Activated naive CD8-positive, alpha-beta T cell treated with anti-CD3 and anti-CD28 coated beads, Interleukin-2, amount 10 ng/mL, durations not matched to agents 7 days and 5 days (primary cell): ENCODE measurements at regions of chr9 and their contacts with region 1.

Region 1: DNA sequence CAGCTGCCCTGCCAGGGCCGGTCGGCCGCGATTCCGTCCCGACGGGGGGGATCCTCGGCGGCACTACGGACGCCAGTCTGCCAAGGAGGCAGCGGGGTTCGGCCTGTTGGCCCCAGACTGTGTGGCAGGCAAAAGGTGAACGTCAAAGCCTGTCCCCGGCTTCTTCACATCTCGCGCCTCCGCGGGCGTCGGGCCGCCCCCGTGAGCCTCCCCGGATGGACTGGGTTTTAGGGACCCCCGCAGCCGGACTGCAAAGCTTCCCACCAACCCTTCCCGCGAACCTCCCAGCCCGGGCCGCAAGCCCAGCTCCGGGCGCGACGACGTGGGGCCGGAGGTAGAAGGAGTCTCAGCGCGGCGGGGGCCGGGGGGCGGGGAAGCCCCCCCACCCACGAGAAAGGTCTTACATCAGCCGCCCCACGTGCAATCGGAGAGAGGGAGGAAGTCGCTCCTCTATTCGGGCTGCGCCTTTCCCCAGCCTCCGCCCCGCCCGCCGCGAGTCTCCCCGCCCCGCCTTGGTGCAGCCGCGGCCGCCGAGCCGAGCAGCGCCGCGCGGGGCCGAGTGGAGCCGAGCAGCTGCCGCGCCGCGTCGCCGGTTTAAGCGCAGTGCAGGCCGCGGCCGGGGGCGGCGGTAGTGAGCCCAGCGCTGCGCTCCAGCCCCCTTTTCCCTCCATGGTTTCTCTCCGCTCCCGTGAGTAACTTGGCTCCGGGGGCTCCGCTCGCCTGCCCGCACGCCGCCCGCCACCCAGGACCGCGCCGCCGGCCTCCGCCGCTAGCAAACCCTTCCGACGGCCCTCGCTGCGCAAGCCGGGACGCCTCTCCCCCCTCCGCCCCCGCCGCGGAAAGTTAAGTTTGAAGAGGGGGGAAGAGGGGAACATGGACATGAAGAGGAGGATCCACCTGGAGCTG is at the start of gene ANP32B:
- DNase-seq: peak; percentile 99
- ATAC-seq: peak; percentile 88
- H3K4me3 Mint-ChIP-seq: peak within 1 kb of the TSS; percentile 86
- H3K27ac Mint-ChIP-seq: peak within 1 kb of the TSS; percentile 89
- H3K4me1 Mint-ChIP-seq: peaks cover 38% of the 10 kb centered on the region
- H3K27me3 Mint-ChIP-seq: no peaks in the 10 kb centered on the region
- total RNA-seq, gene ANP32B: 295 to 296 TPM

Region 2: DNA sequence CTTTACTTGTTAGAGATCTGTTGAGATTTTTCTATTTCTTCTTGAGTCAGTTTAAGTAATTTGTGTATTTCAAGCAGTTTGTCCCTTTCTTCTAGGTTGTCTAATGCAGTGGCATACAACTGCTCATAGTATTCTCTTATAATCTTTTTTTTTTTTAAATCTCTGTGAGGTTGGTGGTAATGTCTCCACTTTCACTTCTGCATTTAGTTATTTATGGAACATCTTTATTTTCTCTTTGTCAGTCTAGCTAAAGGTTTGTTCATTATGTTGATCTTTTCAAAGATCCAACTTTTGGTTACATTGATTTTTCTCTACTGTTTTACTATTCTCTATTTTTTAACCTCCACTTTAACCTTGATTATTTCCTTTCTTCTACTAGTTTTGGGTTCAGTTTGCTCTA is 116.1 kb before region 1 on chr9:
- POLR2A ChIA-PET with region 1: no interaction called
- DNase-seq: no peak
- ATAC-seq: no peak
- H3K4me3 Mint-ChIP-seq: no peak overlapping the region
- H3K27ac Mint-ChIP-seq: no peak overlapping the region
- H3K4me1 Mint-ChIP-seq: no peaks in the 10 kb centered on the region
- H3K27me3 Mint-ChIP-seq: peaks cover 52% of the 10 kb centered on the region

Region 3: DNA sequence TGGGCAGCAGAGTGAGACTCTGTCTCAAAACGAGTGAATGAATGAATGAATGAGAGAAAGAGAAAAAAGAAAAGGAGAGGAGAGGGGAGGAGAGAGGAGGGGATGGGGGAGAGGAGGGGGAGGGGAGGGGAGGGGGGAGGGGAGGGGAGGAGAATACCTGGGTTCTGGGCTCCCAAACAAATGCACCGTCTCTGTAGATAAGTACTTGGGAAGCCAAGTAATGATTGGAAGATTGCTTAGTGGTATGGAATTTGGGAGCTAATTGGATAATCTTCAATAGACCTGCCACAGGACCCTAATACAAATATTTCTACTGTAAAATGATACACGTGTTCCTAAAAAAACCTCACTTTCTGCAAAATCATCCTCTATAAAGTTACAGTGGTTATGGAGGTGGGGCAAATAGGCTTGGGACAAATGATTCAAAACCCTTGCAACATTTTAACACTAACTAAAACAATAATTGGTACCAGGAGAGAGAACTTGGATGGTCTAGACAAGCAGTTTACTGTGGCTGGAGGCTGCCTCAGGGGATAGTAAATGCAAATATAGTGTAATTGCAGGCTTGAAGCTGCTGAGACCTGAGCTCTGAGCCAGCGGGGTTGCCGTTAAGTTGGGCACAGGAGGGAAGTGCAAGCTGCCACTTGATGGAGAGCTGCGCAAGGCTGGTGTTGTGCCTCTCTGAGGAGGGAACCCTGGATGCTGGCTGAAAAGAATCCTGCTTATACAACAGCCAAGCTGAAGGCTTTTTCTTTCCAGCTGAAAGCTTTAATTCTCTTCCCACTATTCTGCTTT is 48.4 kb before region 1 on chr9:
- POLR2A ChIA-PET with region 1: interaction called, 10 read pairs
- DNase-seq: no peak
- ATAC-seq: no peak
- H3K4me3 Mint-ChIP-seq: no peak overlapping the region
- H3K27ac Mint-ChIP-seq: no peak overlapping the region
- H3K4me1 Mint-ChIP-seq: peaks cover 33% of the 10 kb centered on the region
- H3K27me3 Mint-ChIP-seq: no peaks in the 10 kb centered on the region

Region 4: GRCh38 chr9:97993000-97993399 is 10.1 kb after region 1 on chr9:
- POLR2A ChIA-PET with region 1: interaction called, 18 read pairs
- DNase-seq: no peak
- ATAC-seq: peak; percentile 84
- H3K4me3 Mint-ChIP-seq: peak overlapping the region; percentile 70
- H3K27ac Mint-ChIP-seq: peak overlapping the region; percentile 80
- H3K4me1 Mint-ChIP-seq: peaks cover 60% of the 10 kb centered on the region
- H3K27me3 Mint-ChIP-seq: no peaks in the 10 kb centered on the region

Region 5: DNA sequence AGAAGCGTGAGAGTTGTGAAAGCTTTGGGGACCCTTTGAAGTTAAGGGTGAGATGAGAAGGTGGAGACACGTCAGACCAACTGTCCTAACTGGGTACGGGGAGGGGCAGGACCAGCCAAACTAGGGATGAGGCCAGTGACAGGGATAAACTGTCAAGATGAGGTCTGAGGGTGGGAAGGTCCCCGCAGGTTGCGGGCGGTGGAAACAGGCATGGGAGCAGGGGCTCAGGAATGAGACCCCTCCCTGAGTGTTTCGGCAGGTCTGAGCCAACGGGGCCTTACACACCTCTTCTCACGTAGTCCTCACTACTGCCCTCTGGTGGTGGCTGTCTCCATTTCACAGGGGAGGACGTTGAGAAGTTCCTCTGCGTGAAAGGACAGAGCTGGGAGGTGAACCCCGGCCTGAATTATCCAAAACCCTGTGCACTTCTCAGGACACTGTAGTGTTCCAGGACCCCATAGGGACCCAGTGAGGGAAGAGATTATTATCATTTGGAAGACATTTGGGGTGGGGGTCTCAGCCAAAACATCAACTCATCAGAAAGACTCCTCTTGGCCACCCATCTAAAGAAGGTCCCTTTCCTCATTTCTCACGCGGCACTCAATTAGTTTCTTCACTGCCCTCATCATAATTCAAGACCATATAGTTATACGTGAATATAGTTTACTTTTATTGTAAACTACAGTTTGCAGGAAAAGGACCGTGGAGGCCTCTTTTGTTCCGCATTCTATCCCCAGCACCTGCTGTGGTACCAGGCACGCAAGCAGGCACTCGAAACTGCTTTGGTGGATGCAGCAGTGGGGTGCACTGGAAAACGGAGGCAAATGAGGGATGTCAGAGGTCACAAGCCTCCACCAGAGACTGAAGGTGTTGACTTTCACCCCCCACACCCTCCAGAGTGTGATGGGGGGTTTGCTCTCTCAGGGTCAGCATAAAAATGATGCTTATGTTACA is 51.9 kb after region 1 on chr9:
- POLR2A ChIA-PET with region 1: interaction called, 14 read pairs
- DNase-seq: peak; percentile 83
- ATAC-seq: peak; percentile 98
- H3K4me3 Mint-ChIP-seq: peak overlapping the region; percentile 50
- H3K27ac Mint-ChIP-seq: peak overlapping the region; percentile 87
- H3K4me1 Mint-ChIP-seq: peaks cover 10% of the 10 kb centered on the region
- H3K27me3 Mint-ChIP-seq: peaks cover 8% of the 10 kb centered on the region

Region 6: GRCh38 chr9:98045234-98046179 is 62.6 kb after region 1 on chr9:
- POLR2A ChIA-PET with region 1: interaction called, 10 read pairs
- DNase-seq: no peak
- ATAC-seq: peak; percentile 94
- H3K4me3 Mint-ChIP-seq: peak overlapping the region; percentile 88
- H3K27ac Mint-ChIP-seq: peak overlapping the region; percentile 98
- H3K4me1 Mint-ChIP-seq: peaks cover 27% of the 10 kb centered on the region
- H3K27me3 Mint-ChIP-seq: peaks cover 7% of the 10 kb centered on the region

Region 7: GRCh38 chr9:98056269-98057137 is 73.6 kb after region 1 on chr9 and contains the start of gene NANS:
- POLR2A ChIA-PET with region 1: interaction called, 18 read pairs
- DNase-seq: peak; percentile 94
- ATAC-seq: peak; percentile 94
- H3K4me3 Mint-ChIP-seq: peak within 1 kb of the TSS; percentile 94
- H3K27ac Mint-ChIP-seq: peak within 1 kb of the TSS; percentile 94
- H3K4me1 Mint-ChIP-seq: peaks cover 20% of the 10 kb centered on the region
- H3K27me3 Mint-ChIP-seq: no peaks in the 10 kb centered on the region
- total RNA-seq, gene NANS: 30.0 to 31.1 TPM